Activated naive CD4-positive, alpha-beta T cell treated with anti-CD3 and anti-CD28 coated beads for 36 hours (primary cell): ENCODE measurements at regions of chr3 and their contacts with region 1.

Region 1: GRCh38 chr3:128680602-128681368 is 30.2 kb upstream of the RPN1 start:
- DNase-seq: peak; percentile 98
- H3K4me3 Mint-ChIP-seq: peak overlapping the region; percentile 86
- H3K27ac Mint-ChIP-seq: peak overlapping the region; percentile 99
- H3K4me1 Mint-ChIP-seq: peaks cover 23% of the 10 kb centered on the region
- H3K27me3 Mint-ChIP-seq: no peaks in the 10 kb centered on the region

Region 2: DNA sequence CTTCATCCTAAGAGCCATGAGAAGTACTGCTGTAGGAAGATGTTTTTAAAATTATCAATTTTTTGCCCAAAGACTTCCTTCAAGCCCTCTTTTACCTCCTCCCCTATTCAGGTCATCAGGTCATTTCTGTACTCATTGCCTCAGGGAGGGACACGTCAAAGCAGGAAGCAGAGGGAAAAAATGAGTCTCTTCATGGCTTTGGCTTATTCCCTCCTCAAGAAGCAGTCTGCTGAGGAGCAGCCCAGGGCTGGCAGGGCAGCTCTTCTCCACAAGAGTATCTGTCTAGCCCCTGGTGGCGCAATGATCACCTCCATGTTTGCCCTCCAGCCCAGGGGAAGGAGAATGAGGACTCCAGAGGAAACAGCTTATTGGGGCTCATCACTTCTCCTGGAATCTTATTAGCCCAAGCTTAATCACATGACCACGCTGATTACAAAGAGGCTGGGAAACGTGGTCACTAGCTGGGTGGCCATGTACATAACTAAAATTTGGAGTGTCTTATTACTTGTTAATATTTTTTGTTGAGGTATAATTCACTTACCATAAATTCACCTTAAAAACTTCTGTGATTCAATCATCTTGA is 143.6 kb before region 1 on chr3:
- CTCF ChIA-PET with region 1: no interaction called
- intact Hi-C with region 1: no loop called
- DNase-seq: no peak
- H3K4me3 Mint-ChIP-seq: no peak overlapping the region
- H3K27ac Mint-ChIP-seq: no peak overlapping the region
- H3K4me1 Mint-ChIP-seq: no peaks in the 10 kb centered on the region
- H3K27me3 Mint-ChIP-seq: peaks cover 37% of the 10 kb centered on the region

Region 3: GRCh38 chr3:128650096-128651050 is 30.4 kb before region 1 on chr3 and contains the start of gene RPN1:
- CTCF ChIA-PET with region 1: interaction called, 15 read pairs
- intact Hi-C with region 1: loop called (anchors 1 kb)
- DNase-seq: peak; percentile 97
- H3K4me3 Mint-ChIP-seq: peak within 1 kb of the TSS; percentile 83
- H3K27ac Mint-ChIP-seq: peak within 1 kb of the TSS; percentile 88
- H3K4me1 Mint-ChIP-seq: peaks cover 30% of the 10 kb centered on the region
- H3K27me3 Mint-ChIP-seq: no peaks in the 10 kb centered on the region
- total RNA-seq, gene RPN1: 124 to 129 TPM

Region 4: DNA sequence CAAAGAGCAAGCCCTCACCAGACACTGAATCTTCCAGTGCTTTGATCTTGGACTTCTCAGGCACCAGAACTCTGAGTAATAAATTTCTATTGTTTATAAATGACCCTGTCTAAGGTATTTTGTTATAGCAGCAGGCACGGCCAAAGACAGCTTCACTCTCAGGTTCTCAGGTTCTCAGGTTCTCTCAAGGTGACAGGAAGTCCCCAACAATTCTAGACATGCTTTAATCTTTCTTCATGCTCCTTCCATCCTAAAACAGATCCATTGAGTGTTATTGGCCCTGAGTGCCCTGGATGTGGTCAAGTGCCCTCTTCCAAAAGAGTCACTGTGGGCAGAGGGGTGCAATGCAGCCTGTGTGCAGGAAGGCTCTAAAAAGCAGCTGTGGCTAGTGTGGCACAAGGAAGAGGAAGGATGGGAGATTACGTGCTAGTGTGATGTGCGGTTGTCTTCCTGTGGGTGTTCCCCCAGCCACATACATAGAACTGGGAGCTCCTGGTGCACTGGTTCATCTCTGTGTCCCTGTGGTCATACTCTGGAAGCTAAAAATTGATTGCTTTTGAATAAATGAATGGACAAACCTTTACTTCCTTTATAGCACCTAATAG is 34.2 kb after region 1 on chr3:
- CTCF ChIA-PET with region 1: interaction called, 28 read pairs
- intact Hi-C with region 1: loop called (anchors 2 kb)
- DNase-seq: peak; percentile 68
- H3K4me3 Mint-ChIP-seq: no peak overlapping the region
- H3K27ac Mint-ChIP-seq: peak overlapping the region; percentile 71
- H3K4me1 Mint-ChIP-seq: peaks cover 22% of the 10 kb centered on the region
- H3K27me3 Mint-ChIP-seq: no peaks in the 10 kb centered on the region

Region 5: GRCh38 chr3:128787256-128788240 is 106.8 kb after region 1 on chr3:
- CTCF ChIA-PET with region 1: interaction called, 15 read pairs
- intact Hi-C with region 1: no loop called
- DNase-seq: peak; percentile 69
- H3K4me3 Mint-ChIP-seq: peak overlapping the region; percentile 76
- H3K27ac Mint-ChIP-seq: peak overlapping the region; percentile 99
- H3K4me1 Mint-ChIP-seq: peaks cover 98% of the 10 kb centered on the region
- H3K27me3 Mint-ChIP-seq: no peaks in the 10 kb centered on the region

Region 6: GRCh38 chr3:128794770-128795649 is 114.2 kb after region 1 on chr3:
- CTCF ChIA-PET with region 1: interaction called, 101 read pairs
- intact Hi-C with region 1: loop called (anchors 1 kb)
- DNase-seq: peak; percentile 83
- H3K4me3 Mint-ChIP-seq: peak overlapping the region; percentile 51
- H3K27ac Mint-ChIP-seq: peak overlapping the region; percentile 91
- H3K4me1 Mint-ChIP-seq: peaks cover 94% of the 10 kb centered on the region
- H3K27me3 Mint-ChIP-seq: no peaks in the 10 kb centered on the region

Region 7: DNA sequence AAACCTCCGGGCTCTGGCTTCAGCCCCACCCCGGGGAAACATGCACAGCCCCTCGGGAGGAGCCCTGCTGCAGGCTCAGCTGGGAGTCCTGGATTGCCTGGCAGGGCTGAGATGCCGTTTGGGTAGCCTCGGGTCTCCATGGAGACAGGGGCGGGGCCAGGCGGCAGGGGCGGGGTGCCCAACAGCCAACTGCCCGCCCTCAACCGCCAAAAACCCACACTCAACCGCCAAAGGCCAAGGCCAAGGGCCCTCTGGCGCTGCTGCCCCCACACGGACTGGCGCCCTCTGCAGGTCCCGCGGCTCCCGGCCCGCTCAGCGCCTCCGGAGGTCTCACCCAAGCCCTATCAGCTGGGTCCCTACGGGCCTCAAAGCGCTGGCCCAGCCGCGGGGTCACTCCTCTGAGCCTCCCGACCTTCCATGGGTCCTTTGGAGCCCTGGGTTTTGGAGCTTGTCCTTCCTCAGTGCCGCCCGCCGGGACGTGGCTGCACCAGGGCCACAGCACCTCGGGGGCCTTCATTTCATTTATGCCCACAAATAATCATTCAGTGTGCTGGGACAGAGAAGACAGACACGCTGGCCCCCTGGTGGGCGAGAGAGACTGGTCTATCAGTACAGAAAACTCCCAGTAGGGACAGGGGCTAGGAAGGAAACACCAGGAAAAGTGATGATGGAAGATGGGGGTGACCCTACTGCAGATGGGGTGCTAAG is 165.1 kb after region 1 on chr3:
- CTCF ChIA-PET with region 1: interaction called, 47 read pairs
- intact Hi-C with region 1: loop called (anchors 1 kb)
- DNase-seq: peak; percentile 89
- H3K4me3 Mint-ChIP-seq: peak overlapping the region; percentile 69
- H3K27ac Mint-ChIP-seq: peak overlapping the region; percentile 79
- H3K4me1 Mint-ChIP-seq: peaks cover 17% of the 10 kb centered on the region
- H3K27me3 Mint-ChIP-seq: no peaks in the 10 kb centered on the region

Region 8: DNA sequence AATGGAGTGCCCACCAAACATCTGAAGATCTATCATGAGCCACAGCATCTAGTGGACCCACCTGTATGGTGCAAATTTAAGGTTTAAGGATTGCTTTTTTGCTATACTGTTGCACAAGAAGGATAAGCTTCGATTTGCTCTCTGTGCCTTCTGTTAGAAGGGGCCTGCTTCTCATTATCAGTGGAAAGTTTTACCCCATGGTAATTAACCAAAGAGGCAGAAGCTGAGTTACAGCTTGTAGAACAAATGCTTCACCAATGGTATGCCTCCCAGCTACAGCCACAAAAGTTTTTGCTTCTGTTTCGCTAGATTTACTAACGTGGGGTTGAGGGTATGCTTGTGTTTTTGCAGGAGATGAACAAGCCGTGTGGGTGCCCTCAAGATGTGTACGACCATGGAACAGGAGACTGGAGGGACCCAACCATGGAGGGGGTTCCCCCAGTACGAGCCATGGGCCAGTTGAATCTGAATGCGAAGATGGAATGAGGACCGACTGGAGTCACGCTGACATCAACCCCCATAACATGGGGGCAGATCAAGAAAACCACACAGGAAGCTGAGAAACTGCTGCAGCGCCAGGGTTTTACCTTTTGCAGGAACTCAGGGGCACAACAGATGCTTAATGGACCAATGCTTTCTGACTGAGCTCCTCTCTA is 242.1 kb after region 1 on chr3:
- CTCF ChIA-PET with region 1: interaction called, 5 read pairs
- intact Hi-C with region 1: loop called (anchors 1 kb)
- DNase-seq: peak; percentile 80
- H3K4me3 Mint-ChIP-seq: peak overlapping the region; percentile 73
- H3K27ac Mint-ChIP-seq: peak overlapping the region; percentile 80
- H3K4me1 Mint-ChIP-seq: peaks cover 48% of the 10 kb centered on the region
- H3K27me3 Mint-ChIP-seq: no peaks in the 10 kb centered on the region

Region 9: GRCh38 chr3:129039271-129040038 is 358.7 kb after region 1 on chr3:
- CTCF ChIA-PET with region 1: no interaction called
- intact Hi-C with region 1: no loop called
- DNase-seq: no peak
- H3K4me3 Mint-ChIP-seq: no peak overlapping the region
- H3K27ac Mint-ChIP-seq: no peak overlapping the region
- H3K4me1 Mint-ChIP-seq: peaks cover 16% of the 10 kb centered on the region
- H3K27me3 Mint-ChIP-seq: peaks cover 1% of the 10 kb centered on the region